ENCODE measurements at regions of chr17 and their contacts with region 1.

Region 1: DNA sequence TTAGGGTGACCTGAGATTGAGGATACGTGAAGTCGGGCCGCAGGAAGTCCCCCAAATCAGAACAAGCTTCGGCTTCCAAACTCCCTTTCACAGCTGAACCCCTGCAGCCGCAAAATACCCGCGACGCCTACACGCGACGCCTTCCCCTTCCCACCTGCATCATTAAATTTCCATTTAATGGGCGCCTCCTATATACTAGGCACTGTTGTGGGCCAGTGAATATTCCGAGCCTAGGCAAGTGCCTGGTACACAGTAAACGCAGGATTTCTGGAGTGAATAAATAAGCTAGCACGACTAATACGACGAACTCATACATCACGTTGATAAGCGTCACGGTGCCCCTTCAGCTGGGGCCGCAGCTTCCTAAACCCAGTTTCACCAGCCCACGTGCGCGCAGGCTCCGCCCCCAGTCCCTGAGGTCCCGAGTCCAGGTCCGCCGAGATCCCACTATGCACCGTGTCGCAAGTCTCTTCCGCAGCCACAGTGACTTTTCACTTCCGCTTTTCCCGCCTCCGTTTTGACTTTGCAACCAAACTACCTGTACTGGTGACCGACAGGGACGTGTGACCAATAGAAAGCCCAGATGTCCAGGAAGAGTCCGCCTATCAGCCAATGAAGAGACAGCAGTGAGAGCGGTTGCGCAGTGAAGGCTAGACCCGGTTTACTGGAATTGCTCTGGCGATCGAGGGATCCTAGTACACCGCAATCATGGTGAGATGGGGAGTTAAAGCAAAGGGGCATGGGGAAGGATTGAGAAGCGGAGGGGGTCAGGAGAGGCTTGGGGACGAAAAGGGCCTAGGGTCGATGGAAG is at the start of gene PSMB3:
- DNase-seq: peak; percentile 99 to 100 (median 100)
- H3K4me3 ChIP-seq: peak within 1 kb of the TSS; percentile 96 to 99 (median 98)
- H3K4me3 Mint-ChIP-seq: peak within 1 kb of the TSS; percentile 94 to 100
- H3K27ac ChIP-seq: peak within 1 kb of the TSS; percentile 97 to 98
- H3K27ac Mint-ChIP-seq: peak within 1 kb of the TSS; percentile 96 to 100 (median 99)
- H3K4me1 ChIP-seq: peaks cover 55 to 62% of the 10 kb centered on the region in 2 donors
- H3K4me1 Mint-ChIP-seq: peaks cover 50% of the 10 kb centered on the region
- H3K27me3 ChIP-seq: peaks cover 11 to 36% of the 10 kb centered on the region in 2 donors
- H3K27me3 Mint-ChIP-seq: peaks cover 23 to 39% (median 31%) of the 10 kb centered on the region in 3 donors
- CTCF ChIP-seq: no peak
- polyA plus RNA-seq, gene PSMB3: 315 to 689 (median 625) TPM

Region 2: GRCh38 chr17:38674749-38675615 is 77.3 kb before region 1 on chr17 and contains the start of gene EPOP:
- intact Hi-C with region 1: loop called in 1 of 2 experiments (anchors 5 kb)
- DNase-seq: peak; percentile 73 to 84 (median 75)
- H3K4me3 ChIP-seq: peak within 1 kb of the TSS in 2 of 3 experiments; percentile 23 to 73
- H3K4me3 Mint-ChIP-seq: peak within 1 kb of the TSS; percentile 28 to 82
- H3K27ac ChIP-seq: no peak within 1 kb of the TSS
- H3K27ac Mint-ChIP-seq: peak within 1 kb of the TSS in 1 of 7 donors; percentile 83
- H3K4me1 ChIP-seq: peaks cover 16 to 30% of the 10 kb centered on the region in 2 donors
- H3K4me1 Mint-ChIP-seq: peaks cover 32% of the 10 kb centered on the region
- H3K27me3 ChIP-seq: peaks cover 52 to 55% of the 10 kb centered on the region in 2 donors
- H3K27me3 Mint-ChIP-seq: peaks cover 54 to 76% (median 76%) of the 10 kb centered on the region in 3 donors
- CTCF ChIP-seq: no peak
- polyA plus RNA-seq, gene EPOP: 0.63 TPM in 1 of 3 donors, not detected in the others

Region 3: GRCh38 chr17:38729886-38730525 is 22.3 kb before region 1 on chr17 and contains the start of gene CISD3:
- intact Hi-C with region 1: loop called in 1 of 2 experiments (anchors 1 kb)
- DNase-seq: peak; percentile 80 to 84 (median 84)
- H3K4me3 ChIP-seq: peak within 1 kb of the TSS; percentile 66 to 94 (median 89)
- H3K4me3 Mint-ChIP-seq: peak within 1 kb of the TSS; percentile 88 to 94
- H3K27ac ChIP-seq: peak within 1 kb of the TSS; percentile 16 to 81
- H3K27ac Mint-ChIP-seq: peak within 1 kb of the TSS; percentile 78 to 93 (median 89)
- H3K4me1 ChIP-seq: peaks cover 47 to 50% of the 10 kb centered on the region in 2 donors
- H3K4me1 Mint-ChIP-seq: peaks cover 53% of the 10 kb centered on the region
- H3K27me3 ChIP-seq: no peaks in the 10 kb centered on the region
- H3K27me3 Mint-ChIP-seq: peaks cover 0 to 8% (median 0%) of the 10 kb centered on the region in 3 donors
- CTCF ChIP-seq: peak; percentile 78
- polyA plus RNA-seq, gene CISD3: 7.1 to 61.2 (median 53.4) TPM

Region 4: GRCh38 chr17:38799378-38800236 is 47.3 kb after region 1 on chr17 and contains the start of gene PIP4K2B:
- intact Hi-C with region 1: loop called (anchors 1 to 10 kb)
- DNase-seq: peak; percentile 96 to 97 (median 97)
- H3K4me3 ChIP-seq: peak within 1 kb of the TSS; percentile 73 to 97 (median 87)
- H3K4me3 Mint-ChIP-seq: peak within 1 kb of the TSS; percentile 96 to 98
- H3K27ac ChIP-seq: peak within 1 kb of the TSS; percentile 88 to 93
- H3K27ac Mint-ChIP-seq: peak within 1 kb of the TSS; percentile 84 to 94 (median 91)
- H3K4me1 ChIP-seq: peaks cover 25 to 27% of the 10 kb centered on the region in 2 donors
- H3K4me1 Mint-ChIP-seq: peaks cover 32% of the 10 kb centered on the region
- H3K27me3 ChIP-seq: no peaks in the 10 kb centered on the region
- H3K27me3 Mint-ChIP-seq: no peaks in the 10 kb centered on the region
- CTCF ChIP-seq: no peak
- polyA plus RNA-seq, gene PIP4K2B: 4.4 to 20.2 (median 4.6) TPM

Region 5: DNA sequence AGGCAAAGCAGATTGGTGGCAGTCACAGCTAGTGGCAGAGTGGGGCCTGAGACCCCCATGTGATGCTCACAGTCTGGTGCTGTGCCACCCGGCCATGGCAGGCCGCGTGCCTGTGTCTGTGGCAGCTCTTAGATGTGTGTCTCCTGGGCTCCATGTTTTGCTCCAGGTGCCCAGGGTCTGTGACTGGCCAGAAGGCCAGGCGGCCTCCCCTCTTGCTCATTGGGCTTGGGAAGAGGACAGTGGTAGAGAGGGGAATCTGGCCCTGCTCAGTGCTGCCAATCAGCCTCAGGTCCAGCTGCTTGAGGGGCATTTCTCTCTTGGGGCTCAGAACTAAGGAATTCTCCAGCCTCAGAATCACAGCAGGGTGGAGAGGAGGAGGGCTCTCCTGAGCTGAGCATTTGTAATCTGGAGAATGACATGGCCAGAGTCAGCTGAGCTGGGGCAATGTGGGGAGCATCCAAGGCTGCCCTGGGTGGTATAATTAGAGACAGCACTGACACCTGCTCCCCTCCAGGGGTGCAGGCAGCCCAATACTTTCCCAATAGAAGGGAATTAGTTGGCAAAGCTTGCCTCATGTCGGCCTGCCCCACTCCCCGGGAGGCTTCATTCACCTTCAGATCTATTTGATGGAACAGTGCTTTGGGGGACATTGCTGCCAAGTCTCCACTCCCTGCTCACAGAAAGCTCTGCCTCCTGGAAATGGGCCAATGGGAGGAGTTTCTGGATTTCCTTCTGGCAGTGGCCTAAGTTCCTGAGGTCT is 170.4 kb after region 1 on chr17:
- intact Hi-C with region 1: no loop called
- DNase-seq: no peak
- H3K4me3 ChIP-seq: no peak overlapping the region
- H3K4me3 Mint-ChIP-seq: no peak overlapping the region
- H3K27ac ChIP-seq: peak overlapping the region; percentile 6 to 60
- H3K27ac Mint-ChIP-seq: peak overlapping the region; percentile 37 to 80 (median 72)
- H3K4me1 ChIP-seq: peaks cover 33 to 47% of the 10 kb centered on the region in 2 donors
- H3K4me1 Mint-ChIP-seq: peaks cover 55% of the 10 kb centered on the region
- H3K27me3 ChIP-seq: no peaks in the 10 kb centered on the region
- H3K27me3 Mint-ChIP-seq: no peaks in the 10 kb centered on the region
- CTCF ChIP-seq: no peak